ENCODE measurements at regions of chr3 and their contacts with region 1.

Region 1: GRCh38 chr3:157088601-157089454 is 71.1 kb downstream of the CCNL1 start:
- DNase-seq: peak; percentile 96
- ATAC-seq: peak; percentile 87

Region 2: GRCh38 chr3:156554842-156555687 is 533.8 kb before region 1 on chr3 and contains the start of gene SSR3:
- intact Hi-C with region 1: loop called (anchors 2 kb)
- DNase-seq: peak; percentile 100
- ATAC-seq: peak; percentile 99
- total RNA-seq, gene SSR3: 195 TPM

Region 3: GRCh38 chr3:156816800-156817645 is 271.8 kb before region 1 on chr3:
- intact Hi-C with region 1: loop called (anchors 5 kb)
- DNase-seq: peak; percentile 95
- ATAC-seq: peak; percentile 95

Region 4: GRCh38 chr3:157113832-157114505 is 25.1 kb after region 1 on chr3:
- intact Hi-C with region 1: loop called (anchors 1 kb)
- DNase-seq: no peak
- ATAC-seq: no peak

Region 5: DNA sequence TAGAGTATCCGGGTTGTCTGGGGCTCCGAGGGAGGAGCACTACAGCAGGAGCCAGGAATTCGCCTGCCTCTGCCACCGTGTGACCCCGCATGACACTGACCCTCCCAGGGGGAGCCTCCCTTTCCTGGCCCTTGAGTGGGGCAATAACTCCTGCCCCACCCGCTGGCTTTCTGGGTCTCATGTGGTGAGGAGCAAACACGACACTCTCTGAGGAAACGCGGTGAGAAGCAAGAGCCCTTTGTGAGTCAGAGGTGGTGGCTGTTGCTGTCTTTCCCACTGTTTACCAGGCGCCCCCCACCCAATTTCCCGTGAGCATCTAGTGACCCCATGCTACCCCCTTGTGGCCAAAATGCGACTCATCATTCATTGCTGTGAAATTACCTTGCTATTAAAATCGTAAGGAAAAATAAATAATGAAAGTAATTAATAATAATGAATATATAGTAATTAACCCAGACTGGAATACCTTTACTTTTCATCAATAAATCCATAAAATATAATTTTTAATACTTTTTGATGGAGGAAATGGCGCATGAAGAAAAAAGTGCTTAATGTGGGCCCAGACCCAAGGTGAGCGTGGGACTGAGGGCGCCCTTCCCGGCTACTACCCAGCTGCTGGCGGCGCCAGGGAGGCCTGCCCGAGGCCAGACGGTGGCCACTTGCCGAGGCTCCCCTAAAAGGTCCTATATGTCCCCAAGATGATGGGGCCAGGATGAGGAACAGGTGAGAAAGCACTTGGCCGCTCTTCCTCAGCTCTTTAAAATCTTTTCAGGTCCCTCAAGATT is 41.8 kb after region 1 on chr3:
- intact Hi-C with region 1: loop called (anchors 1 kb)
- DNase-seq: no peak
- ATAC-seq: no peak

Region 6: DNA sequence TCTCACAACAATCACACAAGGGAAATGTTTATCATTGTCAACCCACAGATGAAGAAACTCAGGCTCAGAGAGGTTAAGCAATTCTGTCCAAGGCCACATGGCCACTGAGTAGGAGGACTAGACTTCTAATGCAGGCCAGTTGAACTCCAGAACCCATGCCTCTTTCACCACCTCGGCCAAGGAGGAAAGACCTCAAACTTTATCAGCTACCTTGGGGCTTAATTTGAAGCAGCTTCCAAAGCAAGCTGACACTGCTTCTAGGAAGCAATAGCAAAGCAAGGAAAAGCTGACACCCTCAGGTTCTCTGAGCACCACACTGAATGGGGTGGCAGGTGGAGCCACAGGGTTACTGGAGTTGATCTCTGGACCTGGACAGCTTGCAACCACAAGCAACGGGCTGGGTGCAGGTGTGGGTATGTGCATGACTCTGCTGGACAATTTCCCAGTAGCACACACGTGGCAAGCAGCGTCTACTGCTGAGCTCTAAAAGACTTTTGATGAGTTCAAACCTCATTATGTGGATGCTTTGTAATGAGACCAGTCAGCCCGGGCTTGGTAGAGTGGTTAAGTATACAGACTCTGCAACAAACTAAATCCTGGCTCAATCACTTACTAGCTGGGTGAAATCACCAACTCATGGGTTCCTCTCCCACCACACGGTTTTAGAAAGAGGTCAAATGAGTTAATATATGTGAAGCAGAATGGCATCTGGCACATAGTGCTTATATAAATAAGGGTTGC is 48.0 kb after region 1 on chr3:
- intact Hi-C with region 1: loop called (anchors 1 kb)
- DNase-seq: no peak
- ATAC-seq: peak; percentile 40

Region 7: GRCh38 chr3:157755233-157755632 is 666.4 kb after region 1 on chr3:
- intact Hi-C with region 1: no loop called
- DNase-seq: no peak
- ATAC-seq: no peak

Measured in Right ventricle myocardium inferior (tissue), 1 donor.